Cardiac septum (tissue), 1 donor: ENCODE measurements at regions of chr12 and their contacts with region 1.

Region 1: DNA sequence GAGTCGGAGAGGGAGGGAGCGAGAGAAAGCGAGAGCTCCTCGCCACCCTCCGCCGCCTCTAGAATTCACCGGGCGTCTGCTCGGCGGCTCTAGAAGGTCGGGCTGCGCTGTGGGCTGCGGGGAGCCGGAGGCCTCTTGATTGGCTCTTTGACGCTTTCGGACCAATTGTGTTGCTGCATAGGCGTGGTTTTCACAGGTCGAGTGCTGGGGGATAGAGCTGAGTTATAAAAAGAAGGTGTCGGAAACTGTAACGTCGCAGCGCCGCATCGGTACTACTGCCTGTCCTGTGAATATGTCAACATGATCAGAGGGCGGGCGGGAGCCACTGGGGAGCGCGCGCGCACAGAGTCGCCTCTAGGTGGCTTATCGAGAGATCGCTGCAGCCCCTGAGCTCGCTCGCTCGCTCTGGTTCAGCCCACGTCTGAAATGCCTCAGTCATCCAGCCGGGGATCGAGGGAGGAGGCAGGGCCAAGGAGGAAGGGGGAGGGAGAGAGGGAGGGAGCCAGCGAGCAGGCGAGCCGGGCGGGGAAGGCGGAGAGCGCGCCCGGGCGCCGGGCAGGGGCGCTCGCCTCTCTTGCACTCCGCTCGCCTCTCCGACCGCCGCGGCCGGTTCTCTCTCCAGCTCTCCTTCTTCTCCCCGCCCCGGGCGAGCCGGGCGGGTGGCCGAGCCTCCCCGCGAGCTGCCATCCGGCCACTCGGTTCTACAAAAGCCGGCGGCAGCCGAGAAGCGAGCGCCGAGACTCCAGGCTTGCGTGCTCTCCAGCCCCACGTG is at the start of gene TBX3:
- DNase-seq: peak; percentile 94
- total RNA-seq, gene TBX3: 17.1 TPM

Region 2: GRCh38 chr12:114721266-114721665 is 37.0 kb after region 1 on chr12:
- intact Hi-C with region 1: no loop called
- DNase-seq: no peak

Region 3: DNA sequence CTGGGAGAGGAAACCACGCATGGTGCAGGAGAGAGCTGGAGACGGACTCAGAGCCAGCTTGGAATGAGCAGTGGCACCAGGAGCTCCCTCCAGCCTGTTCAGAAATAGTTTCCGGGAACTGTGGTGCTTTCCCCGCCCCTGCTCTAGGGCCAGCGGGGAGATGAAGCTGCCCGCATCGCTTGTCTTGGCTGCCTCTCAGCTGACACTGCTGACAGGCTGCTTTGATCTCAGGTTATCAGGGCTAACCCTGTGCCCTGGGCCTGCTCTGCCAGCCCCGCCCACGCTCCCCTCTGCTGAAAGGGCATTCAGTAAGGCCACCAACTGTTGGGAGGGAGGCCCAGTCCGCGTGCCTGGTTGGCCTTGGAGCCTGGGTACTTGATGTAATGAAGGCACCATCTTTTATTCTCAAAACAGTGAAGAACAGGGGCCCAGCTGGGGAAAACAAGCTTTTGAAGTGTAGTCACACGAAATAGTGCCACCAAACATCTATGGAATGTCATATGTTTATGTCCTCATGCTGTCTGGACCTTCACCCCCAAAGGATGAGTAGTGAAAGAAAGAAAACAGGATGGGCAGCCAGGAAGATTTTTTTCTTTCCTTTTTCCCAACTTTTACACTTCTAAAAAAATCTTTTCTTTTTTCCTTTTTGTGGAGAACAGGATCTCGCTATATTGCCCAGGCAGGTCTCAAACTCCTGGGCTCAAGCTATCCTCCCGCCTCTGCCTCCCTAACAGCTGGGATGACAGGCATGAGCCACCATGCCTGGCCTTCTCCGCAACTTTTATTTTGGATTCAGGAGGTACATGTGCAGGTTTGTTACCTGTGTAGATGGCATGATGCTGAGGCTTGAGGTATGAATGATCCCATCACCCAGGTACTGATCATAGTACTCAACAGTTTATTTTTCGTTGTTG is 115.5 kb after region 1 on chr12:
- intact Hi-C with region 1: loop called (anchors 5 kb)
- DNase-seq: peak; percentile 89

Region 4: DNA sequence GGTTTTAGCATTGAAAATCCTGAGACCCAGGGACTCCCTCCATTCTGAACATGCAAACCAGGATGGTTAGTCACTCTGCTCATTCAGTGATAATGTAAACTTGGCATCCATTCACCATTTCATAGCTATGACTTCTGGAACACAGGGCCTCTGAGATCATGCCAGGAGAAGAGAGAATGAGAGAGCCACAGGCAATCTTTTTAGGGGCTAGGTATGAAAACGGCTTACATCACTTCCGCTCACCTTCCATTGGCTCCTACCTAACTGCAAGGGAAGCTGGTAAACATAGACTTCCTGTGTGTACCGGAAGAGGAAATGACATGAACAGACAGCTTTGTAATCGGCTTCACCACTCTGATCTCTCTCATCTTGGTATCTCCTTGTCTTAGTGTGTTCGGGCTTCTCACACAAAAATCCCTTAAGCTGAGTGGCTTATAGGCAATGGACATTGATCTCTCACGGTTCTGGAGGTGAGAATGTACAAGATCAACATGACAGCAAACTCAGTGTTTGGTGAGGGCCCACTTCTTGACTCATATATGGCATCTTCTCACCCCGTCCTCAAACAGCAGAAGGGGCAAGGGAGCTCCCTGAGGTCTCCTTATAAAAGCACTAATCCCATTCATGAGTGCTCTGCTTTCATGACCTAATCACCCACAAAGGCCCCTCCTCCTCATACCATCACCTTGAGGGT is 465.5 kb after region 1 on chr12:
- intact Hi-C with region 1: loop called (anchors 10 kb)
- DNase-seq: no peak

Region 5: DNA sequence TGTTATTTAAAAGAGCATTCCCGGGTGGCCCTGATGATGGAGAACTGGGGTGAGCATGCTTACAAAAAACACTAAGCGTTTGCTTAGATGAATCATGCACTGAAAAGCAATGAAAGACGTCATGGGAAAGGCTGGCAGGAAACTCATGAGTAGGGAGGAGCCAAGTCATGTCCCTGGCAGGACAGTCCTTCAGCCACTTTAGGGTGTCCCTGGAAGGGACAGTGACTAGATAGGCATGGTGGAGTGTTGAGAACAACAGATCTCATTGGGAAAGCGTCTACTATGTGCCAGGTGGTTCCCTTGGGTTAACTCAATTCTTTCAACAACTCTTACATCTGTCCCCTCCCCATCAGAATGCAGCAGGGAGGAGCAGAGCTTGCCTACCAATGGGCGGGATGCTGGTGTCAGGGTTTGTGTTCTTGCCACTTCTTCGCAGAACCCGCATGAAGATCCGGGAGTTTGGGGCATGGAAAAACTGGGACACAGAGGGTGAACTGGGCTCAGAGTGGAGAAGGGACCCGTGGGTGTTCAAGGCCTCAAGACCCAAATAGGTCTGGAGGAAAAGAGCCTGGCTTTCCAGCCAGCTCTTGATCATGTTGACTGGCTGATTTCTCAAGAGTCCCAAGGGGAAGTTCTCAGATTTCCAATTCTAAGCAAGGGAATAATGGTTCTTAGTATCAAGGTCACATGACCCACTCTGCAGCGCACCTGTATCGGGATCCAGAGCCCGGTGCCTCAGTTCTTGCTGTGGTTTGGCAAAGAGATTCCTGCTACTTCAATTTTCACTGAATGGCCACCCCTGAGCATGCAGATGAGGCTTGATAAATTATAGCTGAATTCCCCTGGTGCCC is 653.6 kb after region 1 on chr12:
- intact Hi-C with region 1: loop called (anchors 5 kb)
- DNase-seq: no peak

Region 6: GRCh38 chr12:115451780-115452736 is 767.8 kb after region 1 on chr12:
- intact Hi-C with region 1: loop called (anchors 5 kb)
- DNase-seq: no peak